IMR-90 (cell line): ENCODE measurements at regions of chr9 and their contacts with region 1.

Region 1: DNA sequence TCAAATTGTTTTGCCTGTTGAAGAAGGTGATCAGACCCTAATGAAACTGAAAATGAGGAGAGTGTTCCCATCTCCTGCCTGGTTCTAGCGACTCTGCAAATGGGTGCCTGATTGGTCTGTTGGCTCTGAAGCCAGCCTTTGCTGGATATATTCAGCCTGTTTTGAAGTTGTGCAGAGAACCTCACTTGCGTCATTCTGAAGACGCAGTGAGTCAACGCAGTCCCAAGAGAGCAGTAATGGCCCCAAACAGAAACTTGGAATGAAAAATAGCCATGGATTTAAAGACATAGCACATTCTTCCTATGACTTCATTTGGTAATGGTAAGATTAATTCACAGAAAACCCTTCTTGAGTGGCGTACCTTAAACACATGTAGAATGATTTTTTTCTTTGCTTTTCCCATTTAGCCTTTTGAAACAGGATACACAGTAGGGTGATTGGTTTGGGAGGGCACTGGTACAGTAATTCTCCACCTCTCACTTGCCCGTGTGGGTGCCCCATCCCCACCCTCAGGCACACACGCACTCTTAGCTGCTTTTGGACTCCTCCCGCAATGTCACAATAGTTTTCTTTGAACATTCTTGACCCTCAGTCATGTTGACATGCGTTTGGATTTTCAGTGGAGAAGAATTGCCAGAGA is 54.1 kb upstream of the ABL1 start:
- DNase-seq: peak; percentile 98
- ATAC-seq: peak; percentile 87
- H3K4me3 ChIP-seq: peak overlapping the region; percentile 39; the same call in 1 of the 2 replicates
- H3K27ac ChIP-seq: peak overlapping the region; percentile 97
- H3K4me1 ChIP-seq: peaks cover 22% of the 10 kb centered on the region
- H3K27me3 ChIP-seq: no peaks in the 10 kb centered on the region
- CTCF ChIP-seq: no peak
- POLR2A ChIP-seq: peak; percentile 89
- RAD21 ChIP-seq: 0 out of 2 replicates have a peak, but pooled peaks have one; percentile 18

Region 2: GRCh38 chr9:130610862-130611707 is 169.9 kb before region 1 on chr9:
- CTCF ChIA-PET with region 1: no interaction called
- POLR2A ChIA-PET with region 1: no interaction called
- dilution Hi-C with region 1: no loop called
- in situ Hi-C with region 1: no loop called
- intact Hi-C with region 1: no loop called
- DNase-seq: peak; percentile 20
- ATAC-seq: peak; percentile 57
- H3K4me3 ChIP-seq: no peak overlapping the region
- H3K27ac ChIP-seq: no peak overlapping the region
- H3K4me1 ChIP-seq: peaks cover 8% of the 10 kb centered on the region
- H3K27me3 ChIP-seq: no peaks in the 10 kb centered on the region
- CTCF ChIP-seq: no peak
- POLR2A ChIP-seq: no peak
- RAD21 ChIP-seq: no peak

Region 3: DNA sequence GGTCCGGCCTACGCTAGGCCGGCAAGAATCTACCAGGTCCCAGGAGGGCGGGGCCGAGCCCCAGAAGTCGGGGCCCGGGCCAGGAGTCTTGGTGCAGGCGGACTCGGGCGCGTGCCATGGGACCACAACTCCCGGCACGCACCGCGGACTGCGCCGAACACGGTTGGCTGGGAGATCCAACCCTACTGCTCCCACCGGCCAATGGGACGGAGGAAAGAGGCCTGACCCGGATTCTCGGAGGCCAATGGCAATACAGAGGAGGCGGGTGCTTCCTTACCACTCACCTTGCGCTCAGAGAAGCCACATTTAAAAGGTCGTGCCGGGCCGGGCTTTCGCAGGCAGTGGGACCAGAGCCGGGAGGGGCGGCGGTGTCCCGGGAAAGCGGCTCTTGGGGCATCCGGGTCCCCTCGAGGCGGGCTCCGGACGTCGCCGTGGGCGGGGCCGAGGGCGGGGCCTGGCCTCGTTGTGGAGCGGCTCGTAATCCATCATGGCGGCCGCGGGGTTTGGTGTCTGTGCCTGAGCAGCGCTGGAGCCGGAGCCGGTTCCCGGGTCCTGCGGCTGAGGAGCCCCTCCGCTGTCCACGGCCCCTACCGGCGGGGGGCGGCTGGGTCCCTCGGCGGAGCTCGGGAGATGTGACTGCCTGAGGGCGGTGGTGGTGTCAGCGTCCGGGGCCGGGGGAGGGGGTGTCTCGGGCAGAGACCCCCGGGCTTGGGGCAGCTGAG is 68.3 kb before region 1 on chr9:
- CTCF ChIA-PET with region 1: no interaction called
- POLR2A ChIA-PET with region 1: no interaction called
- dilution Hi-C with region 1: no loop called
- in situ Hi-C with region 1: no loop called
- intact Hi-C with region 1: loop called (anchors 5 kb)
- DNase-seq: peak; percentile 98
- ATAC-seq: peak; percentile 97
- H3K4me3 ChIP-seq: peak overlapping the region; percentile 60
- H3K27ac ChIP-seq: peak overlapping the region; percentile 88
- H3K4me1 ChIP-seq: peaks cover 2% of the 10 kb centered on the region; the same call in 1 of the 2 replicates
- H3K27me3 ChIP-seq: no peaks in the 10 kb centered on the region
- CTCF ChIP-seq: no peak
- POLR2A ChIP-seq: peak; percentile 98
- RAD21 ChIP-seq: peak; percentile 3; the same call in 1 of the 2 replicates

Region 4: GRCh38 chr9:130847327-130848217 is 66.6 kb after region 1 on chr9:
- CTCF ChIA-PET with region 1: no interaction called
- POLR2A ChIA-PET with region 1: no interaction called
- dilution Hi-C with region 1: no loop called
- in situ Hi-C with region 1: no loop called
- intact Hi-C with region 1: loop called (anchors 2 kb)
- DNase-seq: peak; percentile 100
- ATAC-seq: peak; percentile 76
- H3K4me3 ChIP-seq: no peak overlapping the region
- H3K27ac ChIP-seq: peak overlapping the region; percentile 73
- H3K4me1 ChIP-seq: peaks cover 27% of the 10 kb centered on the region
- H3K27me3 ChIP-seq: no peaks in the 10 kb centered on the region
- CTCF ChIP-seq: peak; percentile 39
- POLR2A ChIP-seq: peak; percentile 78
- RAD21 ChIP-seq: no peak; the same call in 1 of the 2 replicates

Region 5: GRCh38 chr9:130927995-130928900 is 147.3 kb after region 1 on chr9:
- CTCF ChIA-PET with region 1: no interaction called
- POLR2A ChIA-PET with region 1: no interaction called
- dilution Hi-C with region 1: no loop called
- in situ Hi-C with region 1: no loop called
- intact Hi-C with region 1: no loop called
- DNase-seq: peak; percentile 72
- ATAC-seq: peak; percentile 28
- H3K4me3 ChIP-seq: no peak overlapping the region
- H3K27ac ChIP-seq: peak overlapping the region; percentile 21; the same call in 1 of the 2 replicates
- H3K4me1 ChIP-seq: peaks cover 27% of the 10 kb centered on the region
- H3K27me3 ChIP-seq: no peaks in the 10 kb centered on the region
- CTCF ChIP-seq: no peak
- POLR2A ChIP-seq: no peak
- RAD21 ChIP-seq: no peak